Activated CD8-positive, alpha-beta T cell treated with anti-CD3 and anti-CD28 coated beads for 36 hours (primary cell): ENCODE measurements at regions of chr10 and their contacts with region 1.

Region 1: DNA sequence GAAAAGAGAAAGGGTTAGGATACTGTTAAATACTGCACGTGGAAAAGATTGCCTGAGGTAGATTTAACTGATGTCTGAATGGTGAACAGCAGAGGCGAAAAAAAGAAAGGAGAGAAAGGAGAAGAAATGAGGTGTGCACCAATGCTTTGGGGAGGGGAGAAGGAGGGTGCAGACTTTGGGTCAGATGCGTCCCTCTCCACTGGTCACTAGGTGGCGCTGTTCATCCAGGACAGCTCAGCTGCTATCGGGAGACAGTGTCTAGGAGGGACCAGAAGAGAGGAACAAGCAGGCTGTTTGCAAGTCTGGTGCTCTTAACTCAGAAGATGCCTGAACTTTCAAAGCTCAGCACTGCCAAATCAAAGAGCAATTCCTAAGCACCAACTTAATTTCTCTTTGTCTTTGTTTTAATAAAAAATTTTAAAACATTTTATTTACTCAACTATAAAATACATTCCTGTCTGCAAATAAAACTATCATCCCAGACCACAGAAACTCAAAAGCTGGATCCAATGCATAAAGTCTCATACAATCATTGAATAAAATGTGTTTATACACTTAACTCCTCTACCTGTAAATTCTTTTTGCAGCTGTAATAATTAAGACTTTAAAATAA is 83.9 kb upstream of the PDLIM1 start:
- DNase-seq: peak; percentile 75
- ATAC-seq: peak; percentile 97
- H3K4me3 Mint-ChIP-seq: no peak overlapping the region
- H3K27ac Mint-ChIP-seq: no peak overlapping the region
- H3K4me1 Mint-ChIP-seq: no peaks in the 10 kb centered on the region
- H3K27me3 Mint-ChIP-seq: peaks cover 10% of the 10 kb centered on the region
- CTCF ChIP-seq: peak; percentile 78

Region 2: DNA sequence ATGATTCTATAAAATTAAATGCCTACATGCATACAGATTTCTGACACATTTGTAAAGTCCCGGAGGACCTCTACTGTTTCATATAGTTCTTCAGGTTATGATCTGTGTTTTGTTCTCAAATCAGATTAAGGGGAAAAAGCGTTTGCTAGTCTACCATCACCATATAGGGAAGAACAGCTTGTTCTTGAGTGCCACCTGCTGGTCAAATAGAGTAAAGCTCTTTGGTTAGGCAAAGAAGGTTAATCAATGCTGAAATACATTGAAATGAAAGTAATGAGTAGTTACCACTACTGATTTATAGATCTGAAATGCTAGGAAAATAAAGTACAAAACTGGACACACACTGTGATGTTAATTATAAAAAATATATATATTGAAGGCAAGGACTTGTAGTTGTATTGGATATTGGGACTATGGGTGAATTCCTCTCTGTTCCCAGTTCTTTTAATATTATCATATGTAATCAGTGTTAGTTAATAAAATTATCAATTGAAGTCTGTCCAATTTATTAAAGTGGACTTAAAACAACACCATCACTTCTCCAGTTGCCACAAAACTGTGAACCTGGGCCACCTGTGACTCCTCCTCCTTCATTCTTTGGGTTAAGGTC is 11.3 kb before region 1 on chr10:
- CTCF ChIA-PET with region 1: interaction called, 61 read pairs
- POLR2A ChIA-PET with region 1: no interaction called
- intact Hi-C with region 1: no loop called
- DNase-seq: peak; percentile 57
- ATAC-seq: peak; percentile 80
- H3K4me3 Mint-ChIP-seq: no peak overlapping the region
- H3K27ac Mint-ChIP-seq: no peak overlapping the region
- H3K4me1 Mint-ChIP-seq: no peaks in the 10 kb centered on the region
- H3K27me3 Mint-ChIP-seq: peaks cover 6% of the 10 kb centered on the region
- CTCF ChIP-seq: peak; percentile 91

Region 3: GRCh38 chr10:95403700-95404461 is 29.2 kb after region 1 on chr10:
- CTCF ChIA-PET with region 1: interaction called, 10 read pairs
- POLR2A ChIA-PET with region 1: no interaction called
- intact Hi-C with region 1: no loop called
- DNase-seq: no peak
- ATAC-seq: no peak
- H3K4me3 Mint-ChIP-seq: no peak overlapping the region
- H3K27ac Mint-ChIP-seq: no peak overlapping the region
- H3K4me1 Mint-ChIP-seq: peaks cover 4% of the 10 kb centered on the region
- H3K27me3 Mint-ChIP-seq: peaks cover 2% of the 10 kb centered on the region
- CTCF ChIP-seq: no peak

Region 4: DNA sequence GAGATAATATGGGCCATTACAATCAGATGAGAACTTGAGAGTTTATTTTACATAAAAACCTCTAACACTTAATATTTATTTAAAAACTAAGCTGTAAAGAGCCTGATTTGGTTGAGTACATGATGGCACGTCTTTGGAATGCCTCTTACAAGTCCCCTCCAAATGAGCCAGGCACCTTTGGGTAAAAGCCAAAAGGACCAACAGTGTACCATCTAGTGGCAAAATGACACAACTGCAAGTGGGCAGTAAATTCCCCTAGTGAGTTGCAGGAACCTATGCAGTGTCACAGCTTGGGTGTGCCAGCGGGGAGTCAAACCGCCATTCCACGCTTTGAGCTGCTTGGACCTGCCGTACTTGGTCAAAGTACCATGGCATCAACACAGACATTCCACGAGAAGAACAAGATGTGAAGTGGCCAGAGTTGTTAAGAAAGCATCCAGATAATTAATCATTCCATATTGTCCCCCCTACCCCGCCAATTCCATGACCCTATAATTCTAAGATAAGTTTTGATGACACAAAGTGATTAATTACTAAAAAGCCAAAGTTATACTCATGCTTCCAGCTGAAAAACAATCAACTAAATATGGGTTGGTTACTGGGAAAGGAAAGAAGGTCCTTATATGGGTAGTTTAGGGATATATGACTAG is 71.3 kb after region 1 on chr10:
- CTCF ChIA-PET with region 1: interaction called, 30 read pairs
- POLR2A ChIA-PET with region 1: no interaction called
- intact Hi-C with region 1: loop called (anchors 10 kb)
- DNase-seq: peak; percentile 44
- ATAC-seq: peak; percentile 72
- H3K4me3 Mint-ChIP-seq: no peak overlapping the region
- H3K27ac Mint-ChIP-seq: no peak overlapping the region
- H3K4me1 Mint-ChIP-seq: peaks cover 4% of the 10 kb centered on the region
- H3K27me3 Mint-ChIP-seq: peaks cover 5% of the 10 kb centered on the region
- CTCF ChIP-seq: peak; percentile 89

Region 5: GRCh38 chr10:95469676-95470075 is 95.0 kb after region 1 on chr10:
- CTCF ChIA-PET with region 1: no interaction called
- POLR2A ChIA-PET with region 1: no interaction called
- intact Hi-C with region 1: no loop called
- DNase-seq: no peak
- ATAC-seq: no peak
- H3K4me3 Mint-ChIP-seq: no peak overlapping the region
- H3K27ac Mint-ChIP-seq: no peak overlapping the region
- H3K4me1 Mint-ChIP-seq: peaks cover 2% of the 10 kb centered on the region
- H3K27me3 Mint-ChIP-seq: peaks cover 4% of the 10 kb centered on the region
- CTCF ChIP-seq: no peak